ENCODE measurements at regions of chr12 and their contacts with region 1.

Region 1: DNA sequence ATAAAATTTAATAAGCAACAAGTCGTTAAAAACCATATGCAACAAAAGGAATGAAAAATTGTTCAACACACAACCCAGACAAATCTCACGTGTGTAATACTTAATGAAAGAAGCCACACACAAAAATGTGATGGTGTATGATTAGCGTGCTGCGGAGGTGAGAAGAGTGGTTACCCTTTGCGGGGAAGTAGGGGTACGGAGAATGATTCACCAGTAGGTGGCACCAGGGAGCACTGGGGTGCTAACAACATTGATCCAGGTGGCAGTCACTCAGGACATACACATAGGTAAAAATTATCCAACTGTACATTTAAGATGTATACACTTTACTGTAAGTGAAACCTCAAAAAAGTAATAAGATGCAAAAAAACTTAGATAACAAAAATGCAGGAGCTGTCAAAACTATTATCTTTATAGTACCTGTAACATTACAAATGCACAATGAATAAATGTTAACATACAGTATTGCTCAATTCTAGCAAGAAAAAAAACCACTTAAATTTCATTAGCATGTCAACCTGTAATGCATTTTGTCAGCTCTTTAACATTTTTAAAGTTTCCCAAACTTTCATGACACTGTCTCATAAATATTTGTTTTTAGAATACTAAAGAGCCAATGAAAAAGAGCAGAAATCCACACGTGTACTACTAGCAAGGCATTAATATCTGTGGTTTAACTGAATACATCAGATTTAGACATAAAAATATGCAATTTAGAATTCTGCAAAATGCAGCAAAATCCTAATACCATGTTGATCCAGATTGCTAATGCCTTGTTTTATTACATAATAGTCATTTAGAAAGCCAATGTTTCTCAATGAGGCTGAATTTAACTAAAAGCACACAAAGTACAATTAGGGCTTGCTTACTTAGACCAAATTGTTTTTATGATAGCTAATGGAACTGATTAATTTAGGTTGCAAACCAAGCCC is 46.7 kb downstream of the TMCC3 start:
- DNase-seq: peak; percentile 62
- H3K4me3 Mint-ChIP-seq: no peak overlapping the region
- H3K27ac Mint-ChIP-seq: no peak overlapping the region
- H3K4me1 Mint-ChIP-seq: no peaks in the 10 kb centered on the region
- H3K27me3 Mint-ChIP-seq: peaks cover 17% of the 10 kb centered on the region

Region 2: GRCh38 chr12:94628819-94629472 is 25.2 kb after region 1 on chr12:
- CTCF ChIA-PET with region 1: no interaction called
- POLR2A ChIA-PET with region 1: no interaction called
- intact Hi-C with region 1: no loop called
- DNase-seq: no peak
- H3K4me3 Mint-ChIP-seq: no peak overlapping the region
- H3K27ac Mint-ChIP-seq: no peak overlapping the region
- H3K4me1 Mint-ChIP-seq: no peaks in the 10 kb centered on the region
- H3K27me3 Mint-ChIP-seq: peaks cover 3% of the 10 kb centered on the region

Region 3: DNA sequence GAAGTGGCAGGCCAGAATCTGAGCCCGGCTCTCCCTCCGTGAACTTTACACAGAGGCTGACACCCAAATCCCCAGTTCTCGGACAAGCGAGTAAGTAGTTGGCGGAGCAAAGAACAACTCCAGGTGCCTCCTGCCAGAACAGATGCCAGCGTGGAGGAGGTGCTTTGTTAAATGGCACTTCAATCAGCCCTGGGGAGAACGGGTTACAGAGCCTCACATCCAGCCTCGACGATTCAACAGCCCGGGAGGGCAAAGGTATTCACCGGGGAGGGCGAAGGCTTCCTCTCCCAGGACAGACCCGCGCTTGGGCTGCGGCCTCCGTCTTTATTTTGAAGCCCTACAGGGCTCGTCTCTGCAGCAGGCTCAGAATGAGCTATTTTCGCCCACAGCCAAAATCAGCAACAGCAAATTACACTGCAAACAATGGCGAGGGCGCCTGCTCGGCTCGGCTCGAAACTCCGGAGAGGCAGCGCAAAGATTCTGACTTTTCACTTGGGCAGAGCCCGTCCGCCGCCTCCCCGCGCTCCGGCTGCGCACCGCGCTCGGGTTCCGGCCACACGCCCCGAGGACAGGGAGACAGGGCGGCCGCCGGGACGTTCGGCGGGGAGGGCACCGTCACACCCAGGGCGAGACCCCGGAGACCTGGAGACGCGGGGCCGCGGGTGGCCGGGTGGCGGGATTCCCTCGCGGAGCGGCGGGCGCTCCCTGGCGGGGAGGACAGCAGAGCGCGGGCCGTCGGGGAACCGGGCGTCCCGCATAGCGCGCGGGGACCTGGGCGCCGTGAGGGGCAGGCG is 45.8 kb after region 1 on chr12:
- CTCF ChIA-PET with region 1: interaction called, 3 read pairs
- POLR2A ChIA-PET with region 1: no interaction called
- intact Hi-C with region 1: loop called (anchors 2 kb)
- DNase-seq: peak; percentile 29
- H3K4me3 Mint-ChIP-seq: peak overlapping the region; percentile 65
- H3K27ac Mint-ChIP-seq: no peak overlapping the region
- H3K4me1 Mint-ChIP-seq: peaks cover 13% of the 10 kb centered on the region
- H3K27me3 Mint-ChIP-seq: peaks cover 56% of the 10 kb centered on the region

Region 4: DNA sequence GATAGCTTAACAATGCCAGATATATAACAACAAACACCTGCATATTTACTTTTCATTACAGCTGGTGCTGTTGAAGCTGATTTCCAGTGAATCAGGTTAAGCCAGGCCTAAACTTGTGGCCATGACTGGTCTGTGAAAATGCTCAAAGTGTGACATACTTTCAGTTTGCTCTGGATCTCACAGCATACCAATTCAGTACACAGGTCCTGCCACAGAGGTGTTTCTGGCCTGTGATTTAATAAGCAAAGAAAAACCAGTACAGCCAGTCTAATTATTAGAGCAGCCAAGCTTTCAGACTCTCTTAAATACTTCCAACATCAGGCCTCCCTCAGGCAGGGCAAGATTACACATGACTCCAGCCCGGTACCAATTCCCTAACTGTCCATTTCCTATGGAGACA is 74.1 kb after region 1 on chr12:
- CTCF ChIA-PET with region 1: no interaction called
- POLR2A ChIA-PET with region 1: no interaction called
- intact Hi-C with region 1: no loop called
- DNase-seq: no peak
- H3K4me3 Mint-ChIP-seq: no peak overlapping the region
- H3K27ac Mint-ChIP-seq: no peak overlapping the region
- H3K4me1 Mint-ChIP-seq: peaks cover 10% of the 10 kb centered on the region
- H3K27me3 Mint-ChIP-seq: peaks cover 5% of the 10 kb centered on the region

Region 5: GRCh38 chr12:94762259-94762942 is 158.7 kb after region 1 on chr12:
- CTCF ChIA-PET with region 1: interaction called, 4 read pairs
- POLR2A ChIA-PET with region 1: no interaction called
- intact Hi-C with region 1: loop called (anchors 1 kb)
- DNase-seq: no peak
- H3K4me3 Mint-ChIP-seq: no peak overlapping the region
- H3K27ac Mint-ChIP-seq: no peak overlapping the region
- H3K4me1 Mint-ChIP-seq: peaks cover 7% of the 10 kb centered on the region
- H3K27me3 Mint-ChIP-seq: peaks cover 5% of the 10 kb centered on the region

Region 6: GRCh38 chr12:94875525-94875924 is 271.8 kb after region 1 on chr12:
- CTCF ChIA-PET with region 1: interaction called, 3 read pairs
- POLR2A ChIA-PET with region 1: no interaction called
- intact Hi-C with region 1: loop called (anchors 10 kb)
- DNase-seq: peak; percentile 23
- H3K4me3 Mint-ChIP-seq: no peak overlapping the region
- H3K27ac Mint-ChIP-seq: no peak overlapping the region
- H3K4me1 Mint-ChIP-seq: peaks cover 17% of the 10 kb centered on the region
- H3K27me3 Mint-ChIP-seq: peaks cover 55% of the 10 kb centered on the region

Measured in activated CD4-positive, alpha-beta memory T cell treated with anti-CD3 and anti-CD28 coated beads for 36 hours (primary cell).